Tibial artery (tissue), 4 donors: ENCODE measurements at regions of chr12 and their contacts with region 1.

Region 1: GRCh38 chr12:109775172-109775881 is 57.9 kb downstream of the TRPV4 start:
- DNase-seq: peak; percentile 53 to 72
- H3K4me3 ChIP-seq: no peak overlapping the region
- H3K27ac ChIP-seq: no peak overlapping the region
- H3K4me1 ChIP-seq: peaks cover 0 to 7% (median 3%) of the 10 kb centered on the region in 4 donors
- H3K27me3 ChIP-seq: peaks cover 0 to 34% of the 10 kb centered on the region in 2 donors
- CTCF ChIP-seq: peak; percentile 70 to 76

Region 2: DNA sequence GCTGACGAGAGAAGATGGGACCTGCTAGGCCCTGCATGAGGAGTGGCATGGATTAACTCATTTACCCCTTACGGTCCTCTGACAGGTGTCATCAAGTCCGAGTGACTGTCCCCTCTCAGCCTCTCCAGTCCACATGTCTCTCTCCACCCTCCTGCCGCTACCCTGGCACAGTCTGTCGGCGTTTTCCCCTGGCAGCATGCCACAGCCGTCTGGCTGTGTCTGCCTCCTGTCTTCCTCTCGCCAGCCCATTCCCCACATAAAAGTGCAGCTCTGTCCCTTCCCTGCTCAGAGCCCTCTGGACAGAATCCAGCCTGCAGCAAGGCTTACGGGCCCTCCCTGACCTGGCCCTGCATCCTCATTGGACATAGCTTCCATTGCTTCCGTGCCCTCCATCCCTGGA is 252.3 kb before region 1 on chr12:
- intact Hi-C with region 1: loop called (anchors 10 kb)
- DNase-seq: no peak
- H3K4me3 ChIP-seq: no peak overlapping the region
- H3K27ac ChIP-seq: no peak overlapping the region
- H3K4me1 ChIP-seq: no peaks in the 10 kb centered on the region
- H3K27me3 ChIP-seq: no peaks in the 10 kb centered on the region
- CTCF ChIP-seq: no peak

Region 3: DNA sequence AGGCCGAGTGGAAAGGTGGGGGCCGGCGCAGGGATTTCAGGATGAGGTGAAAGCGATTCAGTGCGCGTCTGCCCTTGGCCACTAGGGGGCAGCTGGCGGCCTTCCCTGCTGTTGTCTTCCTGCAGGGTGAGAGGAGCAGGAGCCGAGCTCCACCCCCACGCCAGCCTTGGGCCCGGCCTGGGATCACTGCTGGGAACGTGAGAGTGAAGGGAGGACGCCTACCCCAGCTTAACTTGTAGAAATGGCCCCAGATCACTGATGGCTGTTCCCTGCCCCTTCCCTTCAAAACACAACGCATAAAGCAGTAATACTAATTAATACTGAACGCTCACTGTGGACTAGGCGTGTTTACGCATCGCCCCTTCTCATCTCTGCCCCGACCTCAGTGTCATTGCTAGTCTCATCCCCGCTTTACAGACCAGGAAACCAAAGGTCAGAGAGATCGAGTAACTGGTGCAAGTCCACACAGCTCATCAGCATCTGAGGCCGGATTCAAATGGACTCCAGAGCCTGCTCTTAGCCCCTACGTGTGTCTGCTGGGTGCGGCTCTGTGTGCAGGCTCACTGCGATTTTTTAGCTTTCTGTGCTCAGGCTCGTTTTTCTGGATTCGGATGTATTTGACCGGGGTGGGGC is 177.4 kb before region 1 on chr12:
- intact Hi-C with region 1: loop called (anchors 2 kb)
- DNase-seq: peak; percentile 78 to 88
- H3K4me3 ChIP-seq: peak overlapping the region in 1 of 2 donors; percentile 17
- H3K27ac ChIP-seq: no peak overlapping the region
- H3K4me1 ChIP-seq: peaks cover 0 to 12% (median 6%) of the 10 kb centered on the region in 4 donors
- H3K27me3 ChIP-seq: peaks cover 0 to 9% of the 10 kb centered on the region in 2 donors
- CTCF ChIP-seq: peak; percentile 93 to 94